Activated CD8-positive, alpha-beta T cell treated with anti-CD3 and anti-CD28 coated beads for 36 hours (primary cell): ENCODE measurements at regions of chr19 and their contacts with region 1.

Region 1: DNA sequence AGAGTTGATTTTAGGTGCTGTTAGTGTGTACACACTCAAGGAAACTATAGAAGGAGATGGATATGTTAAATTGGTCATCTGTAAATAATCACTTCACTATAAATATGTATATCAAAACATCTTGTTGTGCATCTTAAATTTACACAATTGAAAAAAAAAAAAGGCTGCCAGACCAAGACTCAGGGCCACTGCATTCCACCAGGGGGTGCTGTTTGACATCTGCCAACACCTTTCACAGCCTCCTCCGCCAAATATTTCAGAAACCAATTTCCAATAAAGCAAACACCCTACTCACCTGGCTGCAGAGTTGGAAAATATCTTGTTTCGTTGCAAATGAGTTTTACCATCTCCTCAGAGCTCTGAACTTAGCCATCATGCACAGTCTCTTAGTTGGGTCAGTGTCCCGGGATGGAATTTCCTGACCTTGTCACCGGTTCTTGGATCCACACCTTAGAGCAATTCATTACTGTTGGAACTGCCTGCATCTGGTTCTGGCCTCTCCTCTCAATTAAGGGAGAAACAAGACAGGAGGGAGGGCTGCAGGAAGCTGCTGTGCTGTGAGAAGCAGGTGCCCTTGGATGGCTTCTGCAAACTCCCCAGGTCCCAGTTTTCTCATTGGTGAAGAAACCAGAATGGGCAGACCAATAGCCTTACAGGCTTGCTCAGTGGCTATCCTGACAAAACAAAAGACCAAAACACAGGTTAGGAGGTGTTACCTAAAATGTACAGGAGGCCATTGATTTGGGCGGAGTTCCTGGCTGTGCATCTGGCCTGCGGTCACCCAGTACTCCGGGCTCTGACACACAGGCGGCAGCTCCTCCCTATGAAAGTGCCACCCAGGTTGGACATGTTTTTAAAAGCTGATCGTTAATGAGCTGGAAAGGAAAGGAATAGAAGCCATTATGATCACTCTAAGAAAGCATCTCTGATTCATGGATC is 746.6 kb downstream of the UQCRFS1 start:
- DNase-seq: peak; percentile 84
- ATAC-seq: no peak
- H3K4me3 Mint-ChIP-seq: no peak overlapping the region
- H3K27ac Mint-ChIP-seq: no peak overlapping the region
- H3K4me1 Mint-ChIP-seq: peaks cover 24% of the 10 kb centered on the region
- H3K27me3 Mint-ChIP-seq: no peaks in the 10 kb centered on the region
- CTCF ChIP-seq: peak; percentile 77

Region 2: DNA sequence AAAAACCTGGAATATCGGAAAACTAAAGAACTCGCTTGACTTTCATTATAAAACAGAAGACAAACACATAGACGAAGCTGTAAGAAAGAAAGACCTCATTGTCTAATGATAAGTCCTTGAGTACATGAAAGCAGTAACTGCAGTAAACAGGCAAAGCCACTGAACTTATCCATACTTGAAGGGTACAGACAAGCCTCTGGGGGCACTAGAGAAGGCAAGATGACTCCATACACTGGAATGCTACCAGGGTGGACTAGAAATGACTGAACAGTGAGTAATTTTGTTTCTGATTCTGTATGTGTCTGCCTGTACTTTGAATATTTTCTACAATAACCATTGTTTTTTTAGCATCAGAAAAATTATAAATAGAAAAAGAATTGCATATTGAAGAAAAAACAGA is 238.6 kb after region 1 on chr19:
- CTCF ChIA-PET with region 1: interaction called, 19 read pairs
- POLR2A ChIA-PET with region 1: no interaction called
- intact Hi-C with region 1: loop called (anchors 5 kb)
- DNase-seq: no peak
- ATAC-seq: no peak
- H3K4me3 Mint-ChIP-seq: no peak overlapping the region
- H3K27ac Mint-ChIP-seq: no peak overlapping the region
- H3K4me1 Mint-ChIP-seq: no peaks in the 10 kb centered on the region
- H3K27me3 Mint-ChIP-seq: no peaks in the 10 kb centered on the region
- CTCF ChIP-seq: no peak

Region 3: DNA sequence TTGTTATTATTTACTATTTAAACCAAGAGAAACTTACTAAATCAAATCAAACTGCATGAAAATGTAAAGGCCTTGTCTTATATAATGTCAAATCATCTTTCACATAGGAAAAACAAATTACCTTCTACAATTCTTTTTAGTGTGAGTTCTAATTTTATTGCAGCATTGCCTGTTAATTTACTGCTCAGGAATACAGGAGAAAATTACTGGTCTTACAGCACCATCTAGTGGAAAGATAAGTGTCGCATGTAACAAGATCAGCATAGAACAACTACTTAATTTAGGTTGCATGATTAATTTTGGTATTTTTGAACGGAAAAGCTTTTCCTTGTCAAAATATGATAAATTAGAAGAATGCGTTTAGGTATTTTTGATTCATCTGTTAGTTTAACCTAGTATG is 243.9 kb after region 1 on chr19:
- CTCF ChIA-PET with region 1: interaction called, 19 read pairs
- POLR2A ChIA-PET with region 1: no interaction called
- intact Hi-C with region 1: loop called (anchors 5 kb)
- DNase-seq: no peak
- ATAC-seq: no peak
- H3K4me3 Mint-ChIP-seq: no peak overlapping the region
- H3K27ac Mint-ChIP-seq: no peak overlapping the region
- H3K4me1 Mint-ChIP-seq: no peaks in the 10 kb centered on the region
- H3K27me3 Mint-ChIP-seq: peaks cover 2% of the 10 kb centered on the region
- CTCF ChIP-seq: peak; percentile 70

Region 4: GRCh38 chr19:28878862-28879566 is 412.6 kb after region 1 on chr19:
- CTCF ChIA-PET with region 1: interaction called, 8 read pairs
- POLR2A ChIA-PET with region 1: no interaction called
- intact Hi-C with region 1: loop called (anchors 5 kb)
- DNase-seq: peak; percentile 78
- ATAC-seq: no peak
- H3K4me3 Mint-ChIP-seq: no peak overlapping the region
- H3K27ac Mint-ChIP-seq: no peak overlapping the region
- H3K4me1 Mint-ChIP-seq: no peaks in the 10 kb centered on the region
- H3K27me3 Mint-ChIP-seq: peaks cover 4% of the 10 kb centered on the region
- CTCF ChIP-seq: peak; percentile 77